Right ventricle myocardium inferior (tissue), 1 donor: ENCODE measurements at regions of chr7 and their contacts with region 1.

Region 1: GRCh38 chr7:37352974-37353948 is 95.4 kb downstream of the ELMO1 start:
- DNase-seq: no peak
- ATAC-seq: no peak

Region 2: DNA sequence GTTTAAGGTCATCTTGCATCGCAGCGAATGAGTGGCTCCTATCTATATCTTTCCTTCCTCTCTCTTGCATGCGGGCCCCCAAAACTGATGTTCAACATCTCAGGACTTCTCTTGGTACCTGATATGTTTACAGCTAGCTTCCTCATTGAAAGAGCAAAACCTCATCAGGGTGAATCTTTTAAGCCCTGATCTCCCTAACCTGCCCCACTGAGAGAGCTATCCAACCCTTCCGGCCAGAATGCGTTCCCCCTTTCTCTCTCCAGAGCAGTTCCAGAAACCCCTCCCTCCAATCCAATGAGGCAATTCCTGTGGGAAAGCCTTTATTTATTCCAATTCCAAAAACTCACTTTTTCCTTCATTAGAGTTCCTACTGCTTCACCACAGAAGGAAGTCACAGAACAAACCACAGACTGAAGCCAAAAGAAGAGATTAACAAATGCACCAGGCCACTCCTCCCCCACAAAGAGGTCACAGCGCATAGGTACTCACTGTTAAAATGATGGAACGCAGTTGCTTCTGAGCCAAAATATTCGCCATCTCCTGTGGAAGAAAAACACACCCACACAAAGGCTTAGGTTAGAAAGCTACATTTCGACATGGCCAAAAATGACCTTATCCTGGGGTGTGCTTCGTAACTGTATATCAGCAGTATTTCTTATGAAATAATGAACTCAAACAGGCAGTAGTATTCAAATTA is 137.0 kb before region 1 on chr7:
- intact Hi-C with region 1: loop called (anchors 5 kb)
- DNase-seq: no peak
- ATAC-seq: peak; percentile 29

Region 3: GRCh38 chr7:37284805-37285231 is 68.4 kb before region 1 on chr7:
- intact Hi-C with region 1: loop called (anchors 5 kb)
- DNase-seq: peak; percentile 55
- ATAC-seq: peak; percentile 46

Region 4: GRCh38 chr7:37333075-37333474 is 20.2 kb before region 1 on chr7:
- intact Hi-C with region 1: loop called (anchors 2 kb)
- DNase-seq: no peak
- ATAC-seq: peak; percentile 23

Region 5: GRCh38 chr7:37448636-37449361 is 95.5 kb after region 1 on chr7 and contains the start of gene ELMO1:
- intact Hi-C with region 1: loop called (anchors 1 kb)
- DNase-seq: peak; percentile 92
- ATAC-seq: peak; percentile 88
- total RNA-seq, gene ELMO1: 13.8 TPM